ENCODE measurements at regions of chr20 and their contacts with region 1.

Region 1: GRCh38 chr20:41095110-41095969 is 42.0 kb upstream of the PLCG1 start:
- DNase-seq: peak; percentile 82
- H3K4me3 ChIP-seq: no peak overlapping the region
- H3K27ac ChIP-seq: no peak overlapping the region
- H3K4me1 ChIP-seq: peaks cover 0 to 10% (median 9%) of the 10 kb centered on the region in 4 donors
- H3K27me3 ChIP-seq: no peaks in the 10 kb centered on the region
- CTCF ChIP-seq: peak; percentile 39 to 78 (median 68)
- EP300 ChIP-seq: no peak
- POLR2A ChIP-seq: no peak

Region 2: GRCh38 chr20:40990542-40991120 is 104.7 kb before region 1 on chr20:
- intact Hi-C with region 1: loop called (anchors 1 kb)
- DNase-seq: peak; percentile 89
- H3K4me3 ChIP-seq: no peak overlapping the region
- H3K27ac ChIP-seq: no peak overlapping the region
- H3K4me1 ChIP-seq: peaks cover 0 to 3% (median 0%) of the 10 kb centered on the region in 4 donors
- H3K27me3 ChIP-seq: no peaks in the 10 kb centered on the region
- CTCF ChIP-seq: peak; percentile 70 to 78 (median 76)
- EP300 ChIP-seq: no peak
- POLR2A ChIP-seq: no peak

Measured in sigmoid colon (tissue), 7 donors.